ENCODE measurements at regions of chr1 and their contacts with region 1.

Region 1: DNA sequence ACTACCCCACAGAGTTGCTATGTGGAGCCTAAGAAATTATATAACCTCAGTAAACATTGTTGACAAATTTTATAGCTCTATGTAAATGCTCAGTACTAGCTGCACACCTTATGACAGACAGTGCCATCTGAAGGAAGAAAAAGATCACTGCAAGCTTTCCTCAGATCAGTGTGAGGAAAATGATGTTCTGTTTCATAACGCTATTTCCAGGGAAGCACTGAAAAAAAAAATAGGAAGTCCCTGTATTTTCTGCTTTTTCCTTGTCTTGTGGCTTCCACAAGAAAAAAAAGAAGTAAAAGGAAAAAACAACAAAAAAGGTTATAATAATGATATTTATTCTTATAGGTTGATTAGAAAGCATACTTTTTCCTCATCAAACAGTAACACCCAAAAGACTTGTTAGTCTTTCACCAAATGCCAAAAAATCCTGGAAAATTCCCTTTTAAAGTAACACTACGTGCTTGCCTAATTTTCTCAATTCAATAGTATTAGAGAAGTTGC is 23.2 kb downstream of the LYST start:
- DNase-seq: peak in 3 of 9 donors; percentile 16 to 28 (median 28)
- ATAC-seq: peak; percentile 89
- H3K4me3 ChIP-seq: no peak overlapping the region
- H3K4me3 Mint-ChIP-seq: no peak overlapping the region
- H3K27ac ChIP-seq: no peak overlapping the region
- H3K27ac Mint-ChIP-seq: peak overlapping the region in 1 of 9 donors; percentile 33
- H3K4me1 ChIP-seq: peaks cover 11 to 20% of the 10 kb centered on the region in 2 donors
- H3K4me1 Mint-ChIP-seq: peaks cover 35 to 75% (median 58%) of the 10 kb centered on the region in 7 donors
- H3K27me3 ChIP-seq: no peaks in the 10 kb centered on the region
- H3K27me3 Mint-ChIP-seq: no peaks in the 10 kb centered on the region

Region 2: GRCh38 chr1:235855811-235856429 is 12.4 kb after region 1 on chr1:
- CTCF ChIA-PET with region 1: no interaction called
- POLR2A ChIA-PET with region 1: interaction called, 3 read pairs
- intact Hi-C with region 1: loop called in 1 of 2 experiments (anchors 1 kb)
- DNase-seq: no peak
- ATAC-seq: no peak
- H3K4me3 ChIP-seq: no peak overlapping the region
- H3K4me3 Mint-ChIP-seq: no peak overlapping the region
- H3K27ac ChIP-seq: no peak overlapping the region
- H3K27ac Mint-ChIP-seq: no peak overlapping the region
- H3K4me1 ChIP-seq: peaks cover 7 to 25% of the 10 kb centered on the region in 2 donors
- H3K4me1 Mint-ChIP-seq: peaks cover 14 to 54% (median 25%) of the 10 kb centered on the region in 7 donors
- H3K27me3 ChIP-seq: no peaks in the 10 kb centered on the region
- H3K27me3 Mint-ChIP-seq: no peaks in the 10 kb centered on the region

Region 3: GRCh38 chr1:235876402-235877097 is 33.0 kb after region 1 on chr1:
- CTCF ChIA-PET with region 1: interaction called, 3 read pairs
- POLR2A ChIA-PET with region 1: no interaction called
- intact Hi-C with region 1: loop called in 1 of 2 experiments (anchors 1 kb)
- DNase-seq: peak in 1 of 9 donors; percentile 25
- ATAC-seq: peak; percentile 46
- H3K4me3 ChIP-seq: no peak overlapping the region
- H3K4me3 Mint-ChIP-seq: peak overlapping the region in 5 of 10 donors; percentile 12 to 66 (median 26)
- H3K27ac ChIP-seq: no peak overlapping the region
- H3K27ac Mint-ChIP-seq: peak overlapping the region in 6 of 9 donors; percentile 9 to 90 (median 63)
- H3K4me1 ChIP-seq: peaks cover 15 to 18% of the 10 kb centered on the region in 2 donors
- H3K4me1 Mint-ChIP-seq: peaks cover 9 to 75% (median 25%) of the 10 kb centered on the region in 7 donors
- H3K27me3 ChIP-seq: no peaks in the 10 kb centered on the region
- H3K27me3 Mint-ChIP-seq: peaks cover 0 to 3% (median 0%) of the 10 kb centered on the region in 5 donors